ENCODE measurements at regions of chr2 and their contacts with region 1.

Region 1: DNA sequence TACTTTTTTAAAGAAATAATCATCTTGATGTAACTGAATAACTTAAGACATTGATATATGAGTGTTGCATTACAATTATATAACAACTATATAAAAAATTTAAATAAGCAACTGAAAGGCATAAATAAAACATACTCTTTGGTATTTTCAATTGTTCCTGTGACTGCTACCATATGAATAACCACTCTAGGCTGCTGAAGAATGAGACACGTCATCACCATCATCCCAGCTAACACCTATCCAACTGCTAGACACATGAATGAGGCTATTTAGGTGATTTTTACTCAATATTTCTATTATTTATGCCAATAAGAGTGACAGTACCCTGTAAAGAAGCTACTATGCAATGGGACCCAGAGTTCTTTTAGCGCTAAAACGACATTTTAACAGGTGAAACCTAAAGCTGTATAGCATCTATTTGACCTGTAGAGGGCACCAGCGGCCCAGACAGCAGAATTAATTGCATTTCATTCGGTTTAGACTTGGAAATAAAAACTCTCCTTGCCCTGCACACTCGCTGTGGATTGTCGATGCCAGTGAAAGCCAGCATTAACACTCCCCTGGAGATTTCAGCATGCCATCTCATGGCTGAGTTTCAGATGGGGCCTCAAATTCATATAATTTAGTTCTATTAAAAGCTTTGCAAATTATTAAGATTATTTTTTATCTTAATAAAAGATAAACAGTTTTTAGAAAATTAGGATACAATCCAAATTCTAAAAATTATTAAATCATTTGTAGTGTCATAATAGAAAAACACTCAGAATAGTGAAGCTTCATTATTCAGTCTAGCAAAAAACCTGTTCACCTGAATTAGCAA is 89.4 kb upstream of the MAP2 start:
- DNase-seq: peak; percentile 18 to 57
- ATAC-seq: peak in 5 of 8 donors; percentile 22 to 61 (median 52)
- H3K4me3 ChIP-seq: no peak overlapping the region
- H3K27ac ChIP-seq: no peak overlapping the region
- H3K4me1 ChIP-seq: peaks cover 0 to 5% (median 0%) of the 10 kb centered on the region in 9 donors
- H3K27me3 ChIP-seq: peaks cover 0 to 4% (median 0%) of the 10 kb centered on the region in 7 donors
- CTCF ChIP-seq: peak; percentile 87 to 97 (median 90)

Region 2: DNA sequence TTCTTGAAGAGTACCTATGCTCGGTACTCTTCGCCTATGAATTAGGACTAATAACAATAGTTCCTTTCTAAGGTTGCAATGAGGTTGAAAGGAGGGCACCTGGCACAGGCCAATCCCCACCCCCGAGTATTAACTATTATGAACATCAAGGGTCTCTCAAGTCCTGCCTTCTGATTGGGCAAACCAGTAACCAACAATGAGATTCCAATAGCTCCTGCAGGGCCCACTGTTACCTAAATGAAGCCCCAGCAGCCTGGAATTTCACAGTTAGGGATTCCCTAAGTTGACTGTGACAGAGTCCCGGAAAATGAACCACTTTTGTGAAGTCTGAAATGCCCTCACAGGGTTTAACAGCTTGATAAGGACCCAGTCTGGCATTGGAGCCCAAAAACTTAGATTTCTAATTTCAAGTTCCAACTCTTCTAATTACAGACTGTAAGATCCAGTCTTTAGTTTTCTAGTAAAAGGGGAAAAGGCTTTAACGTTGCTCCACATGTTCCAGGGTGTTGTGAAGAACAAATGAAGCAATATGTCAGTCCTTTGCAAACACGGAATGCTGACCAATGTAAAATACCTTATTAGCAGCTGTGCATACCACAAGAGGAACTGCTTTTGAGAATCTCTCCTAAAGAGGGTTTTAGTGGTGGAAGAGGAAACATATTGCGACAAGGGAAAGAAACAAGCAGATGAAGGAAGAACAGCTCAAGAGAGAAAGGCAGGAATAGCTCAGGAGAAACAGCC is 188.3 kb before region 1 on chr2:
- intact Hi-C with region 1: no loop called
- DNase-seq: no peak
- ATAC-seq: peak in 7 of 8 donors; percentile 46 to 79 (median 61)
- H3K4me3 ChIP-seq: no peak overlapping the region
- H3K27ac ChIP-seq: peak overlapping the region in 1 of 10 donors; percentile 73
- H3K4me1 ChIP-seq: peaks cover 0 to 18% (median 0%) of the 10 kb centered on the region in 9 donors
- H3K27me3 ChIP-seq: no peaks in the 10 kb centered on the region
- CTCF ChIP-seq: no peak

Region 3: GRCh38 chr2:209351636-209352035 is 17.2 kb after region 1 on chr2:
- intact Hi-C with region 1: no loop called
- DNase-seq: no peak
- ATAC-seq: no peak
- H3K4me3 ChIP-seq: no peak overlapping the region
- H3K27ac ChIP-seq: no peak overlapping the region
- H3K4me1 ChIP-seq: no peaks in the 10 kb centered on the region
- H3K27me3 ChIP-seq: peaks cover 0 to 5% (median 0%) of the 10 kb centered on the region in 7 donors
- CTCF ChIP-seq: no peak

Region 4: DNA sequence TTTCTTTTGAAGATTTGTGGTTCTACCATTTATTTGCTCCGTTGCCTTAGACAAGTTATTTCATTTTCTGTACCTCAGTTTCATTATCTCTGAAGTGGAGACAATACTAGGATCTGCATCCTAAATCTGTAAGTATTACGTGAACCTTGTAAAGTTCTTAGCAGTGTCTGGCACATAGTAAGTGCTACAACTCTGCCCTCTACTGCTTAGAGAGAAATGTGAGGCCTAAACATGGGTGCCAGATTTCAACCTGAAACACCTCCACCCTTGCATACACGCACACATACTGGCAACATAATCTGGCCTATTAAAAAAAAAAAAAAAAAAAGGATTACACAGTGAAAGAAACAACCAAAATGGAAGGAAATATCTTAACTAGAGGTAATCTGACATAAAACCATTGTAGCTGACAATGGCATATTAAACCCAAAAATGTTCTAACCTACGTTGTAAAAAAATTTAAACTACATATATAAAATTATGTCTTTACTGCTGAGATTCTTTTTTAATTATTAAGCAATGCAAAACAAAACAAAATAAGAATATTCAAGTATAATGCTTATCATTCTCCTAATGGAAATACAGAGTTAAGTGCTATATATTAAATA is 222.1 kb after region 1 on chr2:
- intact Hi-C with region 1: loop called (anchors 2 to 10 kb)
- DNase-seq: peak in 1 of 2 donors; percentile 17
- ATAC-seq: peak in 7 of 8 donors; percentile 47 to 84 (median 76)
- H3K4me3 ChIP-seq: no peak overlapping the region
- H3K27ac ChIP-seq: no peak overlapping the region
- H3K4me1 ChIP-seq: no peaks in the 10 kb centered on the region
- H3K27me3 ChIP-seq: no peaks in the 10 kb centered on the region
- CTCF ChIP-seq: peak; percentile 23 to 74 (median 56)

Region 5: DNA sequence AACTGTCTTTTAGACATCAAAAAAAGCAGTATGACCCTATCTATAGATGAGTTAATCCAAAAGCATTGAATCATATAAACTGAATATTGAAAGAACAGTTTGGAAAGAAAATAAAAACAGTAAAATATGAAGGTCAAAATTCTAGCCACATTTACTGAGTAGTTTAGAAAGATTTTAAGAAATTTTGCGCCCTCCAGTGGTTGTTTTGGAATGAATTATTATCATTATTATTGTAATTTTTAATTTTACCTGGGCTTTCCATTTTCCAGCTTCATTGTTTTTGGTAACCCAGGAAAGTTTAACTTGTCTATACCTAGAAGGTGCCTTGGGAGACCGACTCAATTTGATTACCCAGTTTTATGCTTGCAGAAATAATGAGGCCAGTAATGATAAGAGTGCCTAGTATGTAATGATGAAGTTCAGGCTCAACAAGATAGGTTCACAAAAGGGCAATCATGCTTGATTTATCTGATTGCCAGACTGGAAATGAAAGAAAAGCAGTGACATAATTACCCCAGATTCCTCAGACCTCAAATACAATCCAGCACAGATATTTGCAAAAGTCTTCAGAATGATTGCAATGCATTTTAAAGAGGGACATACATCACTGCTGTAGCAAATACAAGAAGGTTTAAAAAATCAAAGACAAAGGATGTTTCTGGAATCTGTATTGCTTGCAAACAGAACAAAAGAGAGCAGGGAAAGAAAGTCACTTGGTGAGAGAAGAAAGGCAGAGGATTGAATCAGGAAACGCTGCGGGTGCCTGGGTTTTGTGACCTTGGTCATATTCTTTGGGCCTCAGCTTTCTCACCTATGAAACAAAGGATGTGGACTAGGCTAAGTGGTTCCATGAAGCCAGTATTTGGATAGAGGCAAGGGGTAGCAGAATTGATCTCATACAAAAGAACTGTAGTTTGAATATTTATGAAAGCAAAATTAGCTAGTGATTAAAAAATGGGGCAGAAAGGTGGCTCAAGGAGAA is 243.3 kb after region 1 on chr2:
- intact Hi-C with region 1: loop called in 4 of 10 experiments (anchors 2 to 5 kb)
- DNase-seq: no peak
- ATAC-seq: no peak
- H3K4me3 ChIP-seq: no peak overlapping the region
- H3K27ac ChIP-seq: no peak overlapping the region
- H3K4me1 ChIP-seq: peaks cover 0 to 11% (median 0%) of the 10 kb centered on the region in 9 donors
- H3K27me3 ChIP-seq: no peaks in the 10 kb centered on the region
- CTCF ChIP-seq: peak in 7 of 9 donors; percentile 40 to 55 (median 46)

Region 6: GRCh38 chr2:209960676-209961630 is 626.5 kb after region 1 on chr2:
- intact Hi-C with region 1: loop called in 8 of 10 experiments (anchors 2 to 10 kb)
- DNase-seq: peak in 1 of 2 donors; percentile 21
- ATAC-seq: peak in 6 of 8 donors; percentile 49 to 80 (median 60)
- H3K4me3 ChIP-seq: no peak overlapping the region
- H3K27ac ChIP-seq: no peak overlapping the region
- H3K4me1 ChIP-seq: no peaks in the 10 kb centered on the region
- H3K27me3 ChIP-seq: no peaks in the 10 kb centered on the region
- CTCF ChIP-seq: peak; percentile 32 to 79 (median 68)

Measured in heart right ventricle (tissue), 16 donors.